Activated T-helper 2 cell treated with anti-CD3 and anti-CD28 coated beads, Interferon-gamma antibody, Interleukin-2, Interleukin-4, amounts not matched to agents 10 μg/mL and 5 μg/mL and 100 μg/mL, durations not matched to agents 14 hours and 24 hours and 36 hours (primary cell): ENCODE measurements at regions of chr2 and their contacts with region 1.

Region 1: GRCh38 chr2:230614913-230615332 is 97.7 kb upstream of the CAB39 start:
- DNase-seq: no peak
- H3K4me3 Mint-ChIP-seq: peak overlapping the region; percentile 5
- H3K27ac Mint-ChIP-seq: peak overlapping the region; percentile 57
- H3K4me1 Mint-ChIP-seq: peaks cover 40% of the 10 kb centered on the region
- H3K27me3 Mint-ChIP-seq: no peaks in the 10 kb centered on the region

Region 2: DNA sequence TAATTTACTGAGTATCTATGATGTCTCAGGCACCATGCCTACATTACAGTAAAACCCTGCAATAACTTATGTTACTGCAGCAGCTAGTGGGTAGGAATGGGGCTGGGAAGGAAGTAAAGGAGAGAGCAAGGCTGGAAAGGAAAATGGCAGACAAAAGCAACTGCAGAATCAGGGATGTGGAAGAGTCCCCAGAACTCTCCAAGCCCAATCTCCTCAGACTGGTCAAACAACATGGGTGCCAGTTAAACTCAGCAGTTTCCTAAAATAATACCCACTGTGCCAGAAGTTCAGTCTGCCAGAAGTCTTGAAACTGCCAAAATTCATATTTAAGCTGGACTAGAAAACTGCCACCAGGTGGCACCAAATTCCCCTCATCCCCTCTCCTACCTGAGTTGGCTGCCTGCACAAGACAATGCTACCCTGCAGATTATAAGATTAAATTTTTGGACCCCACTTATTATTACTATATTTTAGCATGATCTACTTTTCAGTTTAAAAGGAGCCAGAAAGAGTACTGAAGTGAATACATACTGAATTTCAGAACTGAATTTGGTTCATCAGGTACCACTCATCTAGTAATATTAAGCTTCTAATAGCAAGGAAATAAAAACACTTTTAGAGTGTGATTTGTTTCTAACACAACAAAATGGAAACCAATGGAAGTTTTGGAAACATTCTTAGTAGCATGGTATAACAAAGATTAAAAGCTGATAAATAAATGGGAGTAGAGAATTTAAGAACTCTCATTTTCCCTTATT is 813.7 kb before region 1 on chr2:
- intact Hi-C with region 1: loop called (anchors 10 kb)
- DNase-seq: peak; percentile 45
- H3K4me3 Mint-ChIP-seq: no peak overlapping the region
- H3K27ac Mint-ChIP-seq: no peak overlapping the region
- H3K4me1 Mint-ChIP-seq: no peaks in the 10 kb centered on the region
- H3K27me3 Mint-ChIP-seq: no peaks in the 10 kb centered on the region

Region 3: GRCh38 chr2:230268606-230269243 is 346.2 kb before region 1 on chr2:
- intact Hi-C with region 1: loop called (anchors 5 kb)
- DNase-seq: no peak
- H3K4me3 Mint-ChIP-seq: peak overlapping the region; percentile 37
- H3K27ac Mint-ChIP-seq: peak overlapping the region; percentile 90
- H3K4me1 Mint-ChIP-seq: peaks cover 75% of the 10 kb centered on the region
- H3K27me3 Mint-ChIP-seq: no peaks in the 10 kb centered on the region

Region 4: DNA sequence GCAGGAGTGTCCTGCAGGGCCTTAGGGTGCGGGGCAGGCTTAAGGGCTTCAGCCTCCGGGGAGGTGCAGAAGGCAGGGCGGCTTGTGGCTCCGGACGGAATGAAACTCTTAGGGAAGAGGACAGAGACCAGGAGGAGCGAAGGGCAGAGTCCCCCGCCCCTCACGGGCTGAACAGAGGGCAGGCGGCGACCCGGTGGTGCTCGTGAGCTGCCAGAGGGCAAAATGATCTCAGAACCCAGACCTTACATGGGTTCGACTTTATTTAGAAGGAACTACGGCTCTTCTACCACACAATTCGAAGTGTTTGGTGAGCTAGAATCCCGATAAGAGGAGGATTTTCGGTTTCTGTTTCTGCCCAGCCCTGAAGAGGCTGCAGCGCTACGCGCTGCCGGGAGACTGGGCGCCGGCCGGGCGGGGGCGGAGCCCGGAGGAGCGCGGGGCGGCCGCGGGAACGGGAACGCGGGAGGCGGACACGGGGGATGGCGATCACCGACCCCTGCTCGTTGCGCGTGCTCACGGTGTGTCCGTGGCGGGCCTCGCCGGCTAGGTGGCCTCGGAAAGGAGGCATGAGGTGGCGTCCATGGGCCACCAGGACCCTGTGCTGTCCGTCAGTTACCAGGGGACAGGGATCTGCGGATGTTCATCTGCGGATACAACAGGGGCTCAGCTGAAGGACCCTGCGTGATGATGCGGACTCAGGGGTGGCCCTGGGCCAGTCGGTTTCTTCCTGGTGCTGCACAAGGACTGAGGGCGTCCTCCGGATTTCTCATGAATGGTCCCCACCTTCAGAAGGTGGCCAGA is 203.2 kb before region 1 on chr2:
- intact Hi-C with region 1: loop called (anchors 1 kb)
- DNase-seq: peak; percentile 74
- H3K4me3 Mint-ChIP-seq: peak overlapping the region; percentile 98
- H3K27ac Mint-ChIP-seq: peak overlapping the region; percentile 100
- H3K4me1 Mint-ChIP-seq: peaks cover 61% of the 10 kb centered on the region
- H3K27me3 Mint-ChIP-seq: no peaks in the 10 kb centered on the region

Region 5: GRCh38 chr2:230472621-230473018 is 142.3 kb before region 1 on chr2:
- intact Hi-C with region 1: loop called (anchors 1 kb)
- DNase-seq: no peak
- H3K4me3 Mint-ChIP-seq: peak overlapping the region; percentile 10
- H3K27ac Mint-ChIP-seq: peak overlapping the region; percentile 91
- H3K4me1 Mint-ChIP-seq: peaks cover 44% of the 10 kb centered on the region
- H3K27me3 Mint-ChIP-seq: no peaks in the 10 kb centered on the region

Region 6: GRCh38 chr2:230668184-230668938 is 53.4 kb after region 1 on chr2:
- intact Hi-C with region 1: loop called (anchors 2 kb)
- DNase-seq: no peak
- H3K4me3 Mint-ChIP-seq: peak overlapping the region; percentile 40
- H3K27ac Mint-ChIP-seq: peak overlapping the region; percentile 93
- H3K4me1 Mint-ChIP-seq: peaks cover 73% of the 10 kb centered on the region
- H3K27me3 Mint-ChIP-seq: no peaks in the 10 kb centered on the region

Region 7: GRCh38 chr2:230798769-230799399 is 184.0 kb after region 1 on chr2:
- intact Hi-C with region 1: loop called (anchors 2 kb)
- DNase-seq: no peak
- H3K4me3 Mint-ChIP-seq: no peak overlapping the region
- H3K27ac Mint-ChIP-seq: peak overlapping the region; percentile 50
- H3K4me1 Mint-ChIP-seq: peaks cover 20% of the 10 kb centered on the region
- H3K27me3 Mint-ChIP-seq: no peaks in the 10 kb centered on the region